MCF 10A (cell line): ENCODE measurements at regions of chr19 and their contacts with region 1.

Region 1: GRCh38 chr19:47035127-47036096 is 13.0 kb downstream of the TMEM160 start:
- DNase-seq: peak; percentile 95
- H3K4me3 Mint-ChIP-seq: peak overlapping the region; percentile 74
- H3K27ac Mint-ChIP-seq: peak overlapping the region; percentile 94
- H3K4me1 Mint-ChIP-seq: peaks cover 8% of the 10 kb centered on the region
- H3K27me3 Mint-ChIP-seq: no peaks in the 10 kb centered on the region
- CTCF ChIP-seq: peak; percentile 91

Region 2: GRCh38 chr19:47020992-47021496 is 14.4 kb before region 1 on chr19:
- CTCF ChIA-PET with region 1: interaction called, 6 read pairs
- POLR2A ChIA-PET with region 1: interaction called, 14 read pairs
- intact Hi-C with region 1: no loop called
- DNase-seq: no peak
- H3K4me3 Mint-ChIP-seq: peak overlapping the region; percentile 72
- H3K27ac Mint-ChIP-seq: no peak overlapping the region
- H3K4me1 Mint-ChIP-seq: peaks cover 5% of the 10 kb centered on the region
- H3K27me3 Mint-ChIP-seq: peaks cover 30% of the 10 kb centered on the region
- CTCF ChIP-seq: no peak

Region 3: GRCh38 chr19:47124937-47125668 is 89.7 kb after region 1 on chr19:
- CTCF ChIA-PET with region 1: interaction called, 34 read pairs
- POLR2A ChIA-PET with region 1: interaction called, 9 read pairs
- intact Hi-C with region 1: loop called (anchors 1 kb)
- DNase-seq: peak; percentile 82
- H3K4me3 Mint-ChIP-seq: no peak overlapping the region
- H3K27ac Mint-ChIP-seq: no peak overlapping the region
- H3K4me1 Mint-ChIP-seq: peaks cover 23% of the 10 kb centered on the region
- H3K27me3 Mint-ChIP-seq: no peaks in the 10 kb centered on the region
- CTCF ChIP-seq: peak; percentile 69